Thyroid gland (tissue), 4 donors: ENCODE measurements at regions of chr3 and their contacts with region 1.

Region 1: GRCh38 chr3:18847583-18848197 is 300.6 kb upstream of the KCNH8 start:
- DNase-seq: no peak
- H3K4me3 ChIP-seq: no peak overlapping the region
- H3K27ac ChIP-seq: no peak overlapping the region
- H3K4me1 ChIP-seq: no peaks in the 10 kb centered on the region
- H3K27me3 ChIP-seq: no peaks in the 10 kb centered on the region
- CTCF ChIP-seq: peak in 4 of 6 experiments; percentile 4 to 42 (median 28)
- POLR2A ChIP-seq: no peak

Region 2: GRCh38 chr3:18643281-18643680 is 204.4 kb before region 1 on chr3:
- intact Hi-C with region 1: no loop called
- DNase-seq: no peak
- H3K4me3 ChIP-seq: no peak overlapping the region
- H3K27ac ChIP-seq: no peak overlapping the region
- H3K4me1 ChIP-seq: no peaks in the 10 kb centered on the region
- H3K27me3 ChIP-seq: no peaks in the 10 kb centered on the region
- CTCF ChIP-seq: no peak
- POLR2A ChIP-seq: no peak

Region 3: GRCh38 chr3:18998069-18998468 is 150.4 kb after region 1 on chr3:
- intact Hi-C with region 1: loop called (anchors 10 kb)
- DNase-seq: no peak
- H3K4me3 ChIP-seq: no peak overlapping the region
- H3K27ac ChIP-seq: no peak overlapping the region
- H3K4me1 ChIP-seq: no peaks in the 10 kb centered on the region
- H3K27me3 ChIP-seq: no peaks in the 10 kb centered on the region
- CTCF ChIP-seq: no peak
- POLR2A ChIP-seq: no peak